Left cardiac atrium (tissue), 4 donors: ENCODE measurements at regions of chr14 and their contacts with region 1.

Region 1: DNA sequence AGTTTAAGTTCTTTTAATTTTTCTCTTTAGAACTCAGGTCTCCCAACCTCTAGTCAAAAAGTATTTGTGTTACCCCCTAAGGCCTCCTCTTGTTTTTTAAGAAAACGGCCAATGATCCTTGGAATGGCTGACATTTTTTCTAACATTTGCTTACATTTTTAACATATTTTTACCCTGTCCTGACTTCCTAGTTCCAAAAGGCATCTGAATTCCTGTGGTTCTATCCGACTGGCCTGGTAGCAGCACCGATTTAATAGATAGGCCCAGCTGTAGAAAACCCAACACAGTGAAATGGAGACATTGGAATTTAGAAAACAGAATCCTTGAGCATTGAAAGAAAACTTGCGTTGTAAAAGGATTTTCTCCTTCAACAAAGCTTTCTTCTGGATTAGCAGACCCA is 134.7 kb upstream of the GSC start:
- DNase-seq: no peak
- ATAC-seq: no peak

Region 2: GRCh38 chr14:94867946-94868771 is 36.5 kb before region 1 on chr14:
- intact Hi-C with region 1: no loop called
- DNase-seq: no peak
- ATAC-seq: peak in 1 of 2 donors; percentile 37

Region 3: DNA sequence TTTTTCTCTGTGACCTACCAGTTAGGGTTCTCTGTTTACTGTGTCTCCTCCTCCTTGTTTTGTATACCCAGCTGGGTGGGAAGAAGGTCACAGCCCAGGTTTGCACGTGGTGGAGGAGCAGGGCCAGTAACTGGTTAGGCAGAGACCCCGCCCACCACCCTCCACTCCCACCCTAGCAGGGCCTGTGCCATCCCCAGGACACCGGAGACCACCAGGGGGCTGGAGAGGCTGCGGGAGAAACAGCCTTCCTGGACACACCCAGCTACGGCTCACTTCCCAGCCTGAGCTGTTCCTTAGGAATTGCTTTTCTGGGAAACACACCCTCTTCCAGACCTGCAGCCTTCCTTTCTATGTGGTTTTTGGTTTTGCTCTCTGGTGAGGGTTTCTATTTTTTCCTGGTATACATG is 1321.1 kb after region 1 on chr14:
- intact Hi-C with region 1: loop called in 1 of 2 experiments (anchors 10 kb)
- DNase-seq: no peak
- ATAC-seq: peak in 1 of 2 donors; percentile 71